ENCODE measurements at regions of chr13 and their contacts with region 1.

Region 1: GRCh38 chr13:92745258-92745657 is 481.3 kb upstream of the GPC6 start:
- DNase-seq: no peak
- ATAC-seq: no peak
- H3K4me3 Mint-ChIP-seq: no peak overlapping the region
- H3K27ac Mint-ChIP-seq: no peak overlapping the region
- H3K4me1 Mint-ChIP-seq: no peaks in the 10 kb centered on the region
- H3K27me3 Mint-ChIP-seq: no peaks in the 10 kb centered on the region

Region 2: DNA sequence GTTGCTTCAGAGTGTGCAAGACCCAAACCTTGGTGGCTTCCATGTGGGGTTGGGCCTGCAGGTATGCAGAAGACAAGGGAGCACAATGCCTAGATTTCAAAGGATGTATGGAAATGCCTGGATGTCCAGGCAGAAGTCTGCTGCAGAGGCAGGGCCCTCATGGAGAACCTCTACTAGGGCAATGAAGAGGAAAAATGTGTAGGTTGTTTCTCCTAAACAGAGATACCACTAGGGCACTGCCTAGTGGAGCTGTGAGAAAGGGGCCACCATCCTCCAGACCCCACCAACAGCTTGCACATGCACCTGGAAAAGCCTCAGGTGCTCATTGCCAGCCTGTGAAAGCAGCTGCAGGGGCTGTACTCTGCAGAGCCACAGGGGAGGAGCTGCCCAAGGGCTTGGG is 51.2 kb before region 1 on chr13:
- CTCF ChIA-PET with region 1: no interaction called
- POLR2A ChIA-PET with region 1: no interaction called
- intact Hi-C with region 1: loop called in 1 of 2 experiments (anchors 2 kb)
- DNase-seq: no peak
- ATAC-seq: no peak
- H3K4me3 Mint-ChIP-seq: no peak overlapping the region
- H3K27ac Mint-ChIP-seq: no peak overlapping the region
- H3K4me1 Mint-ChIP-seq: no peaks in the 10 kb centered on the region
- H3K27me3 Mint-ChIP-seq: no peaks in the 10 kb centered on the region

Region 3: DNA sequence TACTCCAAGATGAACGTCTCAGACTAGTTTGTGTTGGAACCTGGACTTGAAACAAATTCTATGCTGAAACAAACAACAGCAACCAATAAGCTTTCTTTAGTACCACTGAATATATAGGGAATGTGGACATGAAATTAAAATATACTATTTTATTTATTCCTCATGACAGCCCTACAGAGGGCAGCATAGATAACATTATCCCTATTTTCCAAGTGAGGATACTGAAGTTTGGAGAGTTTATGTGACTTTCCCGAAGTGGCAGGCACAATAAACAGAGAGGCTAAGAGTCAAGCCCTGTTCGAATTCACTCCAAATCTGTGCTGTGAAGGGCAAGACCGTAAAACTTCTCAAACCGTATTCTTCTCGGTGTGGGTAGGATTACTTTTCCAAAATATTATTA is 28.5 kb before region 1 on chr13:
- CTCF ChIA-PET with region 1: no interaction called
- POLR2A ChIA-PET with region 1: no interaction called
- intact Hi-C with region 1: no loop called
- DNase-seq: no peak
- ATAC-seq: no peak
- H3K4me3 Mint-ChIP-seq: no peak overlapping the region
- H3K27ac Mint-ChIP-seq: no peak overlapping the region
- H3K4me1 Mint-ChIP-seq: no peaks in the 10 kb centered on the region
- H3K27me3 Mint-ChIP-seq: no peaks in the 10 kb centered on the region

Region 4: GRCh38 chr13:92769046-92769445 is 23.8 kb after region 1 on chr13:
- CTCF ChIA-PET with region 1: no interaction called
- POLR2A ChIA-PET with region 1: no interaction called
- intact Hi-C with region 1: no loop called
- DNase-seq: no peak
- ATAC-seq: no peak
- H3K4me3 Mint-ChIP-seq: no peak overlapping the region
- H3K27ac Mint-ChIP-seq: no peak overlapping the region
- H3K4me1 Mint-ChIP-seq: no peaks in the 10 kb centered on the region
- H3K27me3 Mint-ChIP-seq: no peaks in the 10 kb centered on the region

Region 5: DNA sequence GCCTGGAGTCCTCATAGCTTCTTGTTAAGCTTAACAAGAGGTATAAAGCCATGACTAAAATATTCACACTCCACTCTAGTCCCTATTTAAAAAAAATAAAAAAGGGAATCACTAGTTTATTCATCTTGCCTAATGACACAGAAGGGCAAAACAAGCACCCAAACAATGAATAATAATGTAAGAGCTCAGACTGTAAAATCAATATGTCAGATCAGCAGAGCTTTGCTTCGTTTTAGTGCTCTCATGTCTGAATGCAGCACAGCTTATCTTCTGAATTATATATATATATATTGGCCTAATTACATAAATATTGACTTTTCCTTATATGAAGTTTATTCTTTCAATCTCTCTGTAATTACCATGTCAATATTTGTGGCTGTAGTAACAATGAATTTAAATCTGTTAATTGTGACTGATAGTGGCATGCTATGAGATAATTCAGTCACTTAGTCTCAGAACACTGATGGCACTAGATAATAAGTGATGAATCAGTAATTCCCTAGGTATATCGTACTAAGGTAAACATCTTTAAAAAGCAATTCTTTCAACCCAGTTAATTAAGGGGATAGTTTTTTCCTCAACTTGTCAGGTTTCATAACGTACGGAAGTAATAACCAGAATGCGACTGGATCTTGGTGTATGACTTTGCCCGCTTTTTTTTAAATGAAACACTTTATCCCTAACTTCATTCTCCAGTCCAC is 119.5 kb after region 1 on chr13:
- CTCF ChIA-PET with region 1: no interaction called
- POLR2A ChIA-PET with region 1: no interaction called
- intact Hi-C with region 1: no loop called
- DNase-seq: no peak
- ATAC-seq: no peak
- H3K4me3 Mint-ChIP-seq: no peak overlapping the region
- H3K27ac Mint-ChIP-seq: no peak overlapping the region
- H3K4me1 Mint-ChIP-seq: no peaks in the 10 kb centered on the region
- H3K27me3 Mint-ChIP-seq: no peaks in the 10 kb centered on the region